PC-9 (cell line): ENCODE measurements at regions of chr6 and their contacts with region 1.

Region 1: DNA sequence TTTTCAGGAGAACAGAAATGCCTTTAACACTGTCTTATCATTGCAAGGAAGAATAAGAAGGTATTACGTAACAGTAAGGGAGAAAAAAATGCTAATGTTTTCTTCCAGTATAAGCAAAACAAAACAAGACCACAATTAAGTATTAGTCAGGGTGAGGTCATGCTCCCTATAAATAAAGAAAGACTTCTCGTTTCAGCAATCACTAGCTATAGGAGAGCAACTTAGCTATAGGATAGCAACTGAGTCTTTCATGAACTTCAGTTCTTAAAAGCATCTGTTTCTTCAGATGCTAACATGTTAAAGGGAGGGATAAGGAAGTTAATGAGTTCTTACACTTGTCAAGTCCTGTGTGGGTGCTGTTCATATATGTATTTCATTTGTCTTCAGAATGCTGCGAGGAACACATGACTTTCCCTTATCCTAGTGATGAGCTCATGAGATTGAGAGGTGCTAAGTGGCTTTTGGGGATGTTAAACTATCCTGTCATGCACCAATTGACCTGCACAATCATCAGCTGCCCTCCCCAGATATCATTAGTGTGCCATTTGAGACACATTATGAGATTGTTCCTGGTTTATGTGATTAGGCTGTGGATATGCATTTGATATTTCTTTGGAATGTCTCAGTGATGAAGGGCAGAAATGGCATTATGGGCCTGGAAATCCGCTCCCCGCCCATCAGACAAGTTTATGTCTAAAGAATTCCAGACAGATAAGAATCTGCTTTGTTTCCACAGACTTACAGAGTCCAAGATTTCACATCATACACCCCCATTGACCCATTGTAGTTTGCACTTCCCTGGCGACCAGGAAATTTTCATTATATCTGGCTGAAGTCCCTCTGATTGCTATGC is 37.4 kb downstream of the LAMA4 start:
- DNase-seq: peak; percentile 52 to 96
- H3K4me3 ChIP-seq: peak overlapping the region; percentile 1
- H3K27ac ChIP-seq: peak overlapping the region; percentile 79
- H3K4me1 ChIP-seq: peaks cover 69% of the 10 kb centered on the region
- H3K27me3 ChIP-seq: no peaks in the 10 kb centered on the region
- CTCF ChIP-seq: no peak

Region 2: GRCh38 chr6:111663692-111664564 is 553.0 kb before region 1 on chr6:
- CTCF ChIA-PET with region 1: no interaction called
- POLR2A ChIA-PET with region 1: no interaction called
- intact Hi-C with region 1: no loop called
- DNase-seq: no peak
- H3K4me3 ChIP-seq: no peak overlapping the region
- H3K27ac ChIP-seq: no peak overlapping the region
- H3K4me1 ChIP-seq: no peaks in the 10 kb centered on the region
- H3K27me3 ChIP-seq: no peaks in the 10 kb centered on the region
- CTCF ChIP-seq: no peak

Region 3: DNA sequence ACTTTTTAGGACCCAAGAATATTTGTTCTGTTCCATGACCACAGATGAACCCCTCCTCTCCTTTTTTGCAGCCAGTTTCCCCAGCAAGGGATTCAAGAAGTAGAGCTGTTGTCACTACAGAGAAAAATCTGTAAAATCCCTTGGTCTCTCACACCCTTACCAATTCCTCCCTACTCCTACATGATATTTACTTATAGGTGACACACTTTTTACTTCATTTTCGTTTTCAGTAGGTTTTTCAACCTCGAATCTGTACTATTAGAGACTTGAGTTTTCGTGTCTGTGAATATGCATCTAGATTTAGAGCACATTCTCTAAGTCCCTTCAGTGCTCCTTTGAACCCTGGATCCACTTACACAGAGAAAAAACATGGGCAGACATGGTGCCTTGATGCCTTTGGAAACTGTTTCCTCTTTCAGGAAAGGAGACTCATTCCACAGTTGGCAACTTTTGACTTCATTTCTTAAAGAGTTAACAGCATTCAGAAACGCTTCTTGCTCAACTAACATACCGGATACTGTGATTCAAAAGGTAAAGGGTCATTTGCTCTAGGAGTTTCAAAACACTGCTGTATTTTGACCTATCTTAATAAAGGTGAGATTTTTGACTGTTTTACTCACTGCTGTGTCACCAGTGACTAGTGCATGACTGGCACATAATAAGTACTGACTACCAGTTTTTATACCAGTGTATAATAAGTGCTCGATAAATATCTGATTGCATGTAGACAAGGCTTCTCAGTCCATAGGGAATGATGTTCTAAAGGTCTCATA is 13.2 kb before region 1 on chr6:
- CTCF ChIA-PET with region 1: no interaction called
- POLR2A ChIA-PET with region 1: no interaction called
- intact Hi-C with region 1: loop called (anchors 2 kb)
- DNase-seq: peak; percentile 16 to 100
- H3K4me3 ChIP-seq: peak overlapping the region; percentile 34
- H3K27ac ChIP-seq: peak overlapping the region; percentile 98
- H3K4me1 ChIP-seq: peaks cover 75% of the 10 kb centered on the region
- H3K27me3 ChIP-seq: no peaks in the 10 kb centered on the region
- CTCF ChIP-seq: no peak

Region 4: GRCh38 chr6:112243906-112244305 is 27.0 kb after region 1 on chr6:
- CTCF ChIA-PET with region 1: no interaction called
- POLR2A ChIA-PET with region 1: no interaction called
- intact Hi-C with region 1: loop called (anchors 1 kb)
- DNase-seq: peak; percentile 51 to 85
- H3K4me3 ChIP-seq: peak overlapping the region; percentile 19; the same call in 1 of the 2 replicates
- H3K27ac ChIP-seq: peak overlapping the region; percentile 55
- H3K4me1 ChIP-seq: peaks cover 71% of the 10 kb centered on the region
- H3K27me3 ChIP-seq: no peaks in the 10 kb centered on the region
- CTCF ChIP-seq: no peak